Activated naive CD4-positive, alpha-beta T cell treated with anti-CD3 and anti-CD28 coated beads for 36 hours (primary cell): ENCODE measurements at regions of chr16 and their contacts with region 1.

Region 1: GRCh38 chr16:1705688-1706385 is at the start of gene MAPK8IP3:
- DNase-seq: peak; percentile 91
- H3K4me3 Mint-ChIP-seq: peak within 1 kb of the TSS; percentile 98
- H3K27ac Mint-ChIP-seq: peak within 1 kb of the TSS; percentile 92
- H3K4me1 Mint-ChIP-seq: peaks cover 32% of the 10 kb centered on the region
- H3K27me3 Mint-ChIP-seq: no peaks in the 10 kb centered on the region
- total RNA-seq, gene MAPK8IP3: 46.5 to 50.7 TPM

Region 2: GRCh38 chr16:1474796-1475551 is 230.9 kb before region 1 on chr16 and contains the start of gene CLCN7:
- CTCF ChIA-PET with region 1: no interaction called
- intact Hi-C with region 1: loop called (anchors 5 kb)
- DNase-seq: peak; percentile 90
- H3K4me3 Mint-ChIP-seq: peak within 1 kb of the TSS; percentile 85
- H3K27ac Mint-ChIP-seq: peak within 1 kb of the TSS; percentile 82
- H3K4me1 Mint-ChIP-seq: peaks cover 36% of the 10 kb centered on the region
- H3K27me3 Mint-ChIP-seq: no peaks in the 10 kb centered on the region
- total RNA-seq, gene CLCN7: 31.7 to 34.5 TPM

Region 3: GRCh38 chr16:1656808-1657617 is 48.8 kb before region 1 on chr16:
- CTCF ChIA-PET with region 1: no interaction called
- intact Hi-C with region 1: no loop called
- DNase-seq: no peak
- H3K4me3 Mint-ChIP-seq: no peak overlapping the region
- H3K27ac Mint-ChIP-seq: no peak overlapping the region
- H3K4me1 Mint-ChIP-seq: no peaks in the 10 kb centered on the region
- H3K27me3 Mint-ChIP-seq: no peaks in the 10 kb centered on the region

Region 4: GRCh38 chr16:1723450-1724147 is 17.8 kb after region 1 on chr16:
- CTCF ChIA-PET with region 1: no interaction called
- intact Hi-C with region 1: loop called (anchors 1 kb)
- DNase-seq: peak; percentile 65
- H3K4me3 Mint-ChIP-seq: no peak overlapping the region
- H3K27ac Mint-ChIP-seq: no peak overlapping the region
- H3K4me1 Mint-ChIP-seq: peaks cover 34% of the 10 kb centered on the region
- H3K27me3 Mint-ChIP-seq: no peaks in the 10 kb centered on the region

Region 5: GRCh38 chr16:1772736-1773584 is 67.1 kb after region 1 on chr16 and contains the starts of genes EME2 and MRPS34:
- CTCF ChIA-PET with region 1: interaction called, 10 read pairs
- intact Hi-C with region 1: loop called (anchors 2 kb)
- DNase-seq: peak; percentile 85
- H3K4me3 Mint-ChIP-seq: peak within 1 kb of the TSS; percentile 93
- H3K27ac Mint-ChIP-seq: peak within 1 kb of the TSS; percentile 93
- H3K4me1 Mint-ChIP-seq: peaks cover 7% of the 10 kb centered on the region
- H3K27me3 Mint-ChIP-seq: no peaks in the 10 kb centered on the region
- total RNA-seq, gene EME2: 7.7 to 7.8 TPM
- total RNA-seq, gene MRPS34: 122 to 138 TPM

Region 6: DNA sequence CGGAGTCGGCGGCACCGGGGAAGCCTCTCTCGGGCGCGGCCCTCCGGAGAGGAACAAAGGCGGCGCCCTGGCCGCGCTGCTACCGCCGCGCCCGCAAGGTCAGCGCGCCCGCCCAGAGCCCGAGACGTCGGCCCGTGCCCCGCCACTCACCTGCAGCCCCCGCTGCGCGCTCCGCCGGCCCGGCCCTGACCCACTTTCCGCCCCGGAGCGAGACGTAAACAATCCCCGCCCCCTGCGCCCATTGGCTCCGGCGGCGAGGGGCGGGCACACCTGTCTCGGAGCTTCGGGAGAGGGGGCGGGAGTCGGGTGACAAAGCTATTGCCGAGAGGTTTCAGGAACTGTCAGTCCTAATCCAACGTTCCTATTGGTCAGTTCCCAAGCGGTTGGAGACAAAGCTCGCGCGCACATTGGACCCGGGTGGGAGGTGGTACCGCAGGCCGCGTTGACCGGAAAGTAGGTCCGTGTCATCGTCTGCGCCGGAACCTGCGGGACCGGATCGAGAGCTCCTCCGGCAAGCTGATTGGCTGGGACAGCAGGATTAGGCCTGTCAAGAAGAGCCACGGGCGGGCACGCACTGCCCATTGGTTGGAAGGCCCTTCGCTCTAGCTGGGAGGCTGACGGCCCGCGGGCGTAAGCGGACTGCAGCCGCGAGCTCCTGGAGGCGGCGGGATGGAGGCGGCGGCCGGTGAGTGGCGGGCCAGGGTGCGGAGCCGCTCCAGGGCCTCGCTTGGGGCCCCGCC is 76.7 kb after region 1 on chr16 and contains the starts of genes NUBP2 and SPSB3:
- CTCF ChIA-PET with region 1: interaction called, 8 read pairs
- intact Hi-C with region 1: loop called (anchors 2 kb)
- DNase-seq: peak; percentile 100
- H3K4me3 Mint-ChIP-seq: peak within 1 kb of the TSS; percentile 90
- H3K27ac Mint-ChIP-seq: peak within 1 kb of the TSS; percentile 73
- H3K4me1 Mint-ChIP-seq: peaks cover 28% of the 10 kb centered on the region
- H3K27me3 Mint-ChIP-seq: no peaks in the 10 kb centered on the region
- total RNA-seq, gene NUBP2: 37.9 to 42.4 TPM
- total RNA-seq, gene SPSB3: 14.0 to 17.0 TPM